MCF 10A (cell line): ENCODE measurements at regions of chr10 and their contacts with region 1.

Region 1: DNA sequence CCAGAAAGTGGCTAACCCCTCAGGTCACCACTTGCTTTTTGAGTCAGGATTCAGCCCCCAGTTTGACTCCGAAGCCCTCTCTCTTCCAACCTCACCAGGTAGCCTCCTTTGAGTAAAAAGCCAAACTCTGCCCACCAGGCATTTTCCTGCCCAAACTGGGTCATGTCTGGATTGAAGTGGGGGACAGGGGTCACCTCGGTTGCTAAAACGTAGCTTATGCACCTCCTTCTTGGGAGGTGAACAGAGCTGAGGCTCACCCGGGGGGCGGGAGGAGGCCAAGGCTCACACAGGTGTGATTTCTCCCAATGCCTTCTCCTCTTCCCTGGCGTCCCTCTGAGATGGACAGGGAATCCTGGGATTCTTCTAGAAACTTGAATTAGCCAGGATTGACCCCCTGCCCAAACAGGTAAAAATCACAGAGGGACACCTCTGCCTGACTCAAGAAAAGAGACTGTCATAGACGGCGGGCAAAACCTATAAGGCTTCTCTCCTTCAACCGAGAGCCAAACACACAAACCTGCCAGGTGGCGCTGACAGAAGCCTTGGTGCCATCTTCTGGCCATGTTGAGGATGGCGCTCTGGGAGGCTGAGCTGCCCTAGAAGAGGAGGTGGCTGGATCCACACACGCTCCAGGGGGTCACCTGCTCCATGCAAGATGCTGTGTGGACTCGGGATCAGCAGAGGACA is 51.6 kb downstream of the PRLHR start:
- DNase-seq: peak; percentile 81
- H3K4me3 Mint-ChIP-seq: no peak overlapping the region
- H3K27ac Mint-ChIP-seq: no peak overlapping the region
- H3K4me1 Mint-ChIP-seq: no peaks in the 10 kb centered on the region
- H3K27me3 Mint-ChIP-seq: no peaks in the 10 kb centered on the region
- CTCF ChIP-seq: peak; percentile 90

Region 2: GRCh38 chr10:118341791-118342637 is 201.8 kb before region 1 on chr10 and contains the start of gene FAM204A:
- CTCF ChIA-PET with region 1: interaction called, 4 read pairs
- POLR2A ChIA-PET with region 1: no interaction called
- intact Hi-C with region 1: loop called (anchors 1 kb)
- DNase-seq: peak; percentile 95
- H3K4me3 Mint-ChIP-seq: peak within 1 kb of the TSS; percentile 93
- H3K27ac Mint-ChIP-seq: peak within 1 kb of the TSS; percentile 98
- H3K4me1 Mint-ChIP-seq: peaks cover 21% of the 10 kb centered on the region
- H3K27me3 Mint-ChIP-seq: no peaks in the 10 kb centered on the region
- CTCF ChIP-seq: no peak
- total RNA-seq, gene FAM204A: 101 and 103 TPM in 2 replicates

Region 3: GRCh38 chr10:118430190-118430589 is 113.7 kb before region 1 on chr10:
- CTCF ChIA-PET with region 1: interaction called, 13 read pairs
- POLR2A ChIA-PET with region 1: interaction called, 3 read pairs
- intact Hi-C with region 1: no loop called
- DNase-seq: no peak
- H3K4me3 Mint-ChIP-seq: no peak overlapping the region
- H3K27ac Mint-ChIP-seq: no peak overlapping the region
- H3K4me1 Mint-ChIP-seq: no peaks in the 10 kb centered on the region
- H3K27me3 Mint-ChIP-seq: no peaks in the 10 kb centered on the region
- CTCF ChIP-seq: no peak

Region 4: GRCh38 chr10:118481849-118482248 is 62.0 kb before region 1 on chr10:
- CTCF ChIA-PET with region 1: interaction called, 13 read pairs
- POLR2A ChIA-PET with region 1: interaction called, 4 read pairs
- intact Hi-C with region 1: no loop called
- DNase-seq: peak; percentile 32
- H3K4me3 Mint-ChIP-seq: no peak overlapping the region
- H3K27ac Mint-ChIP-seq: no peak overlapping the region
- H3K4me1 Mint-ChIP-seq: no peaks in the 10 kb centered on the region
- H3K27me3 Mint-ChIP-seq: no peaks in the 10 kb centered on the region
- CTCF ChIP-seq: no peak

Region 5: DNA sequence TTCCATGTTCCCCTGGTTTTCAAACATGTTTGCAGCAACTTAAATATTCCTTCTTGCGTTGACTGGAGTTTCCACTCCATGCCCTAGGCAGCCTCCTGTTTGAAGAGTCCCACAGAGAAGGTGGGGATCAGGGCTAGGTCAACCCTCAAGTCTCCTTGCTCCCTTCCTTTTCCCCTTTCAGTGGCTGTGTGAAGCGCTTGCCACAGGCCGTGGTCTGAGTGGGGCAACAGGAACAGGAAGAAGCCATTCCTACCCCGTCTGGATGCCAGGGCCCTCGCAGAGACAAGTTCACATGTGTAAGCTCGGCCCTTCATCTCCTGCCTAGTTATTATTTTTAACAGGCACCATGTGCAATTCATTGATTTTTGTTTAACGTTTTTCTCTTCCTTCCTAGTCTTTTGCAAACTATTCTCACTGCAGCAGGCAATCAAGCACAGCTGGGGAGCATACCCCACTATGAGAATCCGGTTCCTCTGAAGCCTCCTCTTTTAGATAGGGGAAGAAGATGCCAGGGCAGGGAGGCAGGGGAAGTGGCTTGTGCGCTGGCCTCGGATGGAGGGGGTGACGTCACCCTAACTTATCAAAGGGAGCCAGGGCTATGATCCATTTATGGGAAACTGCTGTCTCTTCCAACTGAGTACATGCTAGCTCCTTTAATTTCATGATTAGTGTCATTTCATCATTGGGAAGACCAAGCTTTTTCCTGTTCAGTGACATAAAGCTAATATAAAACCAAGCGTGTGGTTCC is 12.6 kb before region 1 on chr10:
- CTCF ChIA-PET with region 1: interaction called, 10 read pairs
- POLR2A ChIA-PET with region 1: interaction called, 4 read pairs
- intact Hi-C with region 1: no loop called
- DNase-seq: no peak
- H3K4me3 Mint-ChIP-seq: no peak overlapping the region
- H3K27ac Mint-ChIP-seq: no peak overlapping the region
- H3K4me1 Mint-ChIP-seq: peaks cover 6% of the 10 kb centered on the region
- H3K27me3 Mint-ChIP-seq: no peaks in the 10 kb centered on the region
- CTCF ChIP-seq: no peak